ENCODE measurements at regions of chr1 and their contacts with region 1.

Region 1: GRCh38 chr1:109773146-109773899 is 9.6 kb upstream of the EPS8L3 start:
- DNase-seq: peak; percentile 80
- H3K4me3 ChIP-seq: no peak overlapping the region
- H3K27ac ChIP-seq: no peak overlapping the region
- H3K4me1 ChIP-seq: peaks cover 21% of the 10 kb centered on the region
- H3K27me3 ChIP-seq: no peaks in the 10 kb centered on the region
- CTCF ChIP-seq: peak; percentile 91

Region 2: DNA sequence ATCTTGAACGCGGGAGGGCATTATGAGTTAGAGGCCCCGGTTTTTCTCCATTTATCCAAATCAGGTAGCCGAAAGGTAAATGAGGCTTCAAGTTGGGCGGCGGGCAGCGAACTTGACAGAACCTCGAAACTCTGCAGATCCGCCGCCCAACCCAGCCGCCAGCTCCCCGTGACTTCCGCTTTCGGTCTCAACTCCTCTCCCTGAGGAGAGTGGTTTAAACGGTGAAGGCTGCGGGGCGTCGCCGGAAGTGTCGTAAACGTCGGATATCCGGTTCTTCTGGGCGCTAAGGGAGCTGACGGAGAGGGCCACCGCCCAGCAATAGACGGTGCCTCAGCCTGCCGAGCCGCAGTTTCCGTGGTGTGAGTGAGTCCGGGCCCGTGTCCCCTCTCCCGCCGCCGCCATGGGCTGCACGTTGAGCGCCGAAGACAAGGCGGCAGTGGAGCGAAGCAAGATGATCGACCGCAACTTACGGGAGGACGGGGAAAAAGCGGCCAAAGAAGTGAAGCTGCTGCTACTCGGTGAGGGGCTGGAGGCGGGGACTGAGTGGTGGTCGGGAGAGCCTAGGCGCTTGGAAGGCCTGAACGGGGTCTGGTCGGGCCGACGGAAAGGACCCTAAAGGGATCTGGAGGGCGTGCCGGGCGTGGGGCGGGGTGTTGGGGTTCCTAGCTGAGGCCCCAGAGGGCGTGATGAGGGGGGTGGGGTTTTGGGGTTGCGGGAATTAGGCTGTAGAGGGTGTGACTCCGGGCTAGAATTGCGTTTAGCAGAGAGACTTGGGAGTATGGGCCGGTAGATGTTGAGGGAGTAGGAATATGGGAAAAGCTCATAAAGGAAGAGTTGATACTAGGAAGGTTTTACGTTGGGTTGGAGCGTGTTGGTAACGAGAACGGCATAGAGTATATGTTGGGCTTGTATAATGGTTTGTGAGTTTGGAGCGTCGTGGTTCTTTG is 224.7 kb before region 1 on chr1 and contains the start of gene GNAI3:
- intact Hi-C with region 1: loop called (anchors 5 kb)
- DNase-seq: peak; percentile 96
- H3K4me3 ChIP-seq: peak within 1 kb of the TSS; percentile 91
- H3K27ac ChIP-seq: peak within 1 kb of the TSS; percentile 93
- H3K4me1 ChIP-seq: peaks cover 70% of the 10 kb centered on the region
- H3K27me3 ChIP-seq: no peaks in the 10 kb centered on the region
- CTCF ChIP-seq: no peak
- total RNA-seq, gene GNAI3: 2.0 TPM

Region 3: GRCh38 chr1:109643385-109644230 is 129.7 kb before region 1 on chr1:
- intact Hi-C with region 1: loop called (anchors 5 kb)
- DNase-seq: peak; percentile 83
- H3K4me3 ChIP-seq: no peak overlapping the region
- H3K27ac ChIP-seq: no peak overlapping the region
- H3K4me1 ChIP-seq: peaks cover 7% of the 10 kb centered on the region
- H3K27me3 ChIP-seq: peaks cover 4% of the 10 kb centered on the region
- CTCF ChIP-seq: peak; percentile 90

Measured in left ventricle myocardium inferior (tissue), 1 donor.